ENCODE measurements at regions of chr2 and their contacts with region 1.

Region 1: GRCh38 chr2:7595206-7595605 is 678.0 kb downstream of the RNF144A start:
- DNase-seq: peak; percentile 84
- H3K4me3 ChIP-seq: peak overlapping the region; percentile 39
- H3K27ac ChIP-seq: peak overlapping the region; percentile 82
- H3K4me1 ChIP-seq: peaks cover 37% of the 10 kb centered on the region
- CTCF ChIP-seq: no peak

Region 2: GRCh38 chr2:7557376-7557775 is 37.8 kb before region 1 on chr2:
- CTCF ChIA-PET with region 1: no interaction called
- POLR2A ChIA-PET with region 1: no interaction called
- intact Hi-C with region 1: no loop called
- DNase-seq: no peak
- H3K4me3 ChIP-seq: no peak overlapping the region
- H3K27ac ChIP-seq: no peak overlapping the region
- H3K4me1 ChIP-seq: no peaks in the 10 kb centered on the region
- CTCF ChIP-seq: no peak

Region 3: GRCh38 chr2:7577769-7578168 is 17.4 kb before region 1 on chr2:
- CTCF ChIA-PET with region 1: no interaction called
- POLR2A ChIA-PET with region 1: interaction called, 11 read pairs
- intact Hi-C with region 1: no loop called
- DNase-seq: peak; percentile 21
- H3K4me3 ChIP-seq: no peak overlapping the region
- H3K27ac ChIP-seq: no peak overlapping the region
- H3K4me1 ChIP-seq: peaks cover 6% of the 10 kb centered on the region
- CTCF ChIP-seq: no peak

Region 4: GRCh38 chr2:7607441-7608173 is 12.4 kb after region 1 on chr2:
- CTCF ChIA-PET with region 1: no interaction called
- POLR2A ChIA-PET with region 1: interaction called, 19 read pairs
- intact Hi-C with region 1: no loop called
- DNase-seq: no peak
- H3K4me3 ChIP-seq: no peak overlapping the region
- H3K27ac ChIP-seq: no peak overlapping the region
- H3K4me1 ChIP-seq: peaks cover 24% of the 10 kb centered on the region
- CTCF ChIP-seq: no peak

Region 5: GRCh38 chr2:7625392-7626138 is 30.4 kb after region 1 on chr2:
- CTCF ChIA-PET with region 1: no interaction called
- POLR2A ChIA-PET with region 1: interaction called, 25 read pairs
- intact Hi-C with region 1: no loop called
- DNase-seq: peak; percentile 83
- H3K4me3 ChIP-seq: peak overlapping the region; percentile 34
- H3K27ac ChIP-seq: peak overlapping the region; percentile 62
- H3K4me1 ChIP-seq: peaks cover 26% of the 10 kb centered on the region
- CTCF ChIP-seq: no peak

Region 6: DNA sequence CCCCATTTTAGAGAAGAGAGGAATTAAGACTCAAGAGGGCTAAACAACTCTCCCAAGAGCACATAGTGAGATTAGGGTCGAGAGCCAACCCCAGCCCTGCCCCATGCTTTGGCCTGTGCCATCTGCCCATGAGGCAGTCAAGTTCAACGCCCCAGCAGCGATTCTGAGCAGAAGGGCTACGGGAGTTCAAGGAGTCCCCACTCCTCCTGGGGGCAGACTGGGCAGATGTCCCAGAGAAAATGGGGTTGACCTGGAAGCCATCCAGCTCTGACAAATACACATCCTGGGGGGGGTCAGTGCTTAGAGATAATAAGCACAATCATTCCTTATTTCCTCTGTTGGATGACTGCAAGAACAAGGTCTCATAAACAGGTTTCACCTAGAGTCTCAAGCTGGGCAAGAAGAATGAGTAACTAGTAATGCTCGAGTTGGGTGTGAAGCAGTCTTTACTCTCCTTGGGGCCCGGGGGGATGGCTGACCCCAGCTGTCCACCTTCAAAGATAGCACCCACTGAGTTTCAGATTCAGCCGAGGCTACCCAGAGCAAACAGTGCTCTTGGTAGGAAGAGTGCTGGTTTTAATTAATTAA is 38.5 kb after region 1 on chr2:
- CTCF ChIA-PET with region 1: no interaction called
- POLR2A ChIA-PET with region 1: interaction called, 8 read pairs
- intact Hi-C with region 1: loop called (anchors 2 kb)
- DNase-seq: peak; percentile 25
- H3K4me3 ChIP-seq: no peak overlapping the region
- H3K27ac ChIP-seq: peak overlapping the region; percentile 62
- H3K4me1 ChIP-seq: peaks cover 34% of the 10 kb centered on the region
- CTCF ChIP-seq: no peak

Region 7: GRCh38 chr2:7665880-7666279 is 70.7 kb after region 1 on chr2:
- CTCF ChIA-PET with region 1: no interaction called
- POLR2A ChIA-PET with region 1: interaction called, 3 read pairs
- intact Hi-C with region 1: loop called (anchors 2 kb)
- DNase-seq: peak; percentile 41
- H3K4me3 ChIP-seq: no peak overlapping the region
- H3K27ac ChIP-seq: no peak overlapping the region
- H3K4me1 ChIP-seq: peaks cover 21% of the 10 kb centered on the region
- CTCF ChIP-seq: no peak; the same call in 1 of the 2 replicates

Region 8: DNA sequence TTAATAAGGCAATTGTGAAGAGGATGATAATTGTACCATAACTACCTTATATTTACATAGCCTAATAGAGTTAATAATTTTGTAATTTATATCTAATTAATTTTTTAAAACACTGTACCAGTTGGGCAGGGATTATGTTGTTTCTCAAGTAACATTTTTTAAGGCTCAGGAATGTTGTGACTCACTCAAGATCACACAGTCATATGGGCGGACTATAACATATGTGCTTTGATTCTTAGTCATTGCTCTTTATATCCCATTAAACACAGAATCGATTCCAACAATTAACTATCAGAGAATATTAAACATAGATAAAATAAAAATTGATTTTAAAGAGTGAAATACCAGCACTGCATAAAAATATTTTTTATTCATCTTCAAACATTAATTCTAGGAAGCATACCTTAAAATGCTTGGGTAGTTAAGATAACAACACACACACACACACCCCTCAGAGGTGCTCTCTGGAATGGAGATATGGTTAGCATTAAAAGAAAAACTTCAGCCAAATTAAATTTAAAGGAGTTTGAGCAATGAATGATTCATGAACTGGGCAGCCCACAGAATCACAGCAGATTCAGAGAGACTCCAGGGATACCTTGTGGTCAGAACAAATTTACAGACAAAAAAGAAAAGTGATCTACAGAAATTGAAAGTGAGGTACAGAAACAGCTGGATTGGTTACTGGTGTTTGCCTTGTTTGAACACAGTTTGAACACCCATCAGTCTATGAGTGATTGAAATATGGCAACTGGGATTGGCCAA is 217.2 kb after region 1 on chr2:
- CTCF ChIA-PET with region 1: no interaction called
- POLR2A ChIA-PET with region 1: no interaction called
- intact Hi-C with region 1: no loop called
- DNase-seq: no peak
- H3K4me3 ChIP-seq: no peak overlapping the region
- H3K27ac ChIP-seq: no peak overlapping the region
- H3K4me1 ChIP-seq: peaks cover 5% of the 10 kb centered on the region
- CTCF ChIP-seq: no peak